B cell (primary cell): ENCODE measurements at regions of chr15 and their contacts with region 1.

Region 1: DNA sequence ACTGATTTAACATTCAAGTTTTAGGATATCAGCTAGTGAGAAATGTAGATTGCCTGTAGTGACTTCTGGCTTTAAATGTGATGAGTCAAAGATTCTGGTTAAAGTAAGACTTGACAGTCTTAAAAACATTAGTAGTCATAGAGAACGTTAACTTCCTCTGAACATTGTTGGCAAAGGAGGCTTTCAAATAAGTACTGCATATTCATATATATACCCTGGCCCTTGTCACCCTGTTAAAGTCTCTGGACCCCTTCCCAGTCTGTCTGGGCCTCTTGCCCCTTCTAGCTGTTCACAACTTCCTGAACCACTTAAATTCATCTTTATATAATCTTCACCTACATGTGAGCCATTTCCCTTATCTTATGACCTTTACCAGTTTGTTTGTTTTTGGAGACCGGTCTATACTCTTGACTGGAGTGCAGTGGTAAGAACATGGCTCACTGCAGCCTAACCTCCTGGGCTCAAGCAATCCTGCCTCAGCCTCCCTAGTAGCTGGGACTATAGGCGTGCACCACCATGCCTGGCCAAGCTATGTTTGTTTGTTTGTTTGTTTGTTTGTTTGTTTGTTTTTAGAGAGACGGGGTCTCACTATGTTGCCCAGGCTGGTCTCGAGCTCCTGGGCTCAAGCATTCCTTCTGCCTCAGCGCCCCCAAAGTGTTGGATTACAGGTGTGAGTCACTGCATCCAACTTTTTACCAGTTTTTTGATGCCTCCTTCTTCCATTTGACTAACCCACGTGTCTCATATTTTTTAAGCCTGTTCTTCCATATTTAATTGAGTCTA is 64.4 kb upstream of the CRTC3 start:
- DNase-seq: no peak
- ATAC-seq: no peak
- H3K4me3 ChIP-seq: no peak overlapping the region
- H3K4me3 Mint-ChIP-seq: no peak overlapping the region
- H3K27ac ChIP-seq: no peak overlapping the region
- H3K27ac Mint-ChIP-seq: no peak overlapping the region
- H3K4me1 ChIP-seq: no peaks in the 10 kb centered on the region
- H3K4me1 Mint-ChIP-seq: no peaks in the 10 kb centered on the region
- H3K27me3 ChIP-seq: no peaks in the 10 kb centered on the region
- H3K27me3 Mint-ChIP-seq: no peaks in the 10 kb centered on the region
- CTCF ChIP-seq: no peak

Region 2: GRCh38 chr15:90436952-90437351 is 28.4 kb before region 1 on chr15:
- CTCF ChIA-PET with region 1: no interaction called
- POLR2A ChIA-PET with region 1: interaction called, 3 read pairs
- intact Hi-C with region 1: loop called (anchors 5 kb)
- DNase-seq: no peak
- ATAC-seq: no peak
- H3K4me3 ChIP-seq: no peak overlapping the region
- H3K4me3 Mint-ChIP-seq: no peak overlapping the region
- H3K27ac ChIP-seq: peak overlapping the region in 1 of 2 donors; percentile 44
- H3K27ac Mint-ChIP-seq: no peak overlapping the region
- H3K4me1 ChIP-seq: no peaks in the 10 kb centered on the region
- H3K4me1 Mint-ChIP-seq: peaks cover 5% of the 10 kb centered on the region
- H3K27me3 ChIP-seq: no peaks in the 10 kb centered on the region
- H3K27me3 Mint-ChIP-seq: no peaks in the 10 kb centered on the region
- CTCF ChIP-seq: no peak

Region 3: DNA sequence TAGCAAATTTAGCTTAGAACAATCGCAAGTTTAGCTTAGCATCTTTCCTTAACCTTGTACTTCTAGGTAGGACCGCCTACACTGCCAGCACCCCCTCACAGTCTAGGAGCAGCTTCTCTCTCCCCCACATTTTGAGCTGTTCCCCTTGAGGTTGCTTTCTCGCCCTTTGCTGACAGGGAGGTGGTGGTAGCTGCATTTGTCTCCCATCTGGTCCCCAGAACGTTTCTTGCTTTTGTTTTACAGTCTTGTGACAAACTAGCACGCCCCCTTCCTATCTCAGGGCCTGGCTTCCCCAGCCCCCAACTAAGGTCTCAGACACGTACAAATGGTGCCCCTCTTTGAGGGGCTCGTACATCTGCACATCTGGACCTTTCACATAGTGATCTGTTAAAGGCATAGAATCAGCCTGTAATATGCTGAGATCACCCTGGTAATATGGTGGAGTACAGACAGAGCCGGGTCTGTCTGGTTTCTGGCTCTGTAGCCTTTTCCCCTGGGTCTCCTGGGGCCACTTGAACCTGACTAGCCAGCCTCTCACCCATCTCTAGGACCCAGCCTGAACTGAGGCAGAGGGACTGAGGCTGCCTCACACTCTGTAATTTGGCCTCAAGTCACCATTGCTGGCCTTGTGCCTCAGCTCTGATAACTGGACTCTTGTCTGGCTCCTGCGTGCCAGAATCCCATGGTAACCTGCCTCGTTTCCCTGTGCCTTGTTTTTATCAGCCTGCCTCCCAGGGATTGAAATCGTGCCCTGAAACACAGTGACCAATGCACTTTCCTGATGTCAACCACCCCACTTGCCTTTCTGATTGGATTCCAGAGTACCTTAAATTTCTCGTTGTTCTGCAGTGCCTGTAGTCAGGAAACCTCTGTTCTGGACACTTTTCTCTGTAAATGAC is 92.1 kb after region 1 on chr15:
- CTCF ChIA-PET with region 1: no interaction called
- POLR2A ChIA-PET with region 1: no interaction called
- intact Hi-C with region 1: no loop called
- DNase-seq: no peak
- ATAC-seq: no peak
- H3K4me3 ChIP-seq: no peak overlapping the region
- H3K4me3 Mint-ChIP-seq: peak overlapping the region; percentile 57
- H3K27ac ChIP-seq: no peak overlapping the region
- H3K27ac Mint-ChIP-seq: no peak overlapping the region
- H3K4me1 ChIP-seq: peaks cover 47 to 59% of the 10 kb centered on the region in 2 donors
- H3K4me1 Mint-ChIP-seq: peaks cover 71% of the 10 kb centered on the region
- H3K27me3 ChIP-seq: no peaks in the 10 kb centered on the region
- H3K27me3 Mint-ChIP-seq: no peaks in the 10 kb centered on the region
- CTCF ChIP-seq: no peak

Region 4: DNA sequence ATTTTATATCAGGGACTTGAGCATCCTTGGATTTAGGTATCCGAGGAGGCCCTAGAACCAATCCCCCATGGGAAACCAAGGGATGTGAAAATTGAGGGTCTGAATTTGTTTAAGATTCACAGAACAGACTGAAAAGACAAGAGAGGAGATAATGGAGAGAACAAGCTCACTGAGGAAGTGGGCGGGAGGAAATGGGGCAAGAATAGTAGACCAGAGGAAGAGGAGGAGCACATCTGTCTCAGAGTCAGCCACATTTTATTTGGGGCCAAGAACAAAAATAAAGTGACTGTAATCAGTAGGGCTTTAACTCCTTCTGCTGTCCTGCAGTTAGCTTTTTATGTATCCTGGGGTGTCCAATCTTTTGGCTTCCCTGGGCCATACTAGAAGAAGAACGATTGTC is 315.6 kb after region 1 on chr15:
- CTCF ChIA-PET with region 1: no interaction called
- POLR2A ChIA-PET with region 1: no interaction called
- intact Hi-C with region 1: no loop called
- DNase-seq: no peak
- ATAC-seq: no peak
- H3K4me3 ChIP-seq: no peak overlapping the region
- H3K4me3 Mint-ChIP-seq: peak overlapping the region; percentile 47
- H3K27ac ChIP-seq: peak overlapping the region in 1 of 2 donors; percentile 21
- H3K27ac Mint-ChIP-seq: peak overlapping the region; percentile 50
- H3K4me1 ChIP-seq: peaks cover 11 to 17% of the 10 kb centered on the region in 2 donors
- H3K4me1 Mint-ChIP-seq: peaks cover 35% of the 10 kb centered on the region
- H3K27me3 ChIP-seq: no peaks in the 10 kb centered on the region
- H3K27me3 Mint-ChIP-seq: no peaks in the 10 kb centered on the region
- CTCF ChIP-seq: no peak